Stomach (tissue), 19 donors: ENCODE measurements at regions of chr4 and their contacts with region 1.

Region 1: GRCh38 chr4:159206427-159206871 is 103.6 kb downstream of the RAPGEF2 start:
- DNase-seq: peak in 1 of 2 donors; percentile 25
- H3K4me3 ChIP-seq: no peak overlapping the region
- H3K27ac ChIP-seq: no peak overlapping the region
- H3K4me1 ChIP-seq: peaks cover 0 to 44% (median 19%) of the 10 kb centered on the region in 4 donors
- H3K27me3 ChIP-seq: no peaks in the 10 kb centered on the region
- CTCF ChIP-seq: no peak
- EP300 ChIP-seq: no peak
- POLR2A ChIP-seq: no peak

Region 2: GRCh38 chr4:158722917-158723793 is 483.3 kb before region 1 on chr4 and contains the start of gene PPID:
- intact Hi-C with region 1: loop called (anchors 10 kb)
- DNase-seq: peak; percentile 86 to 96
- H3K4me3 ChIP-seq: peak within 1 kb of the TSS; percentile 68 to 93 (median 82)
- H3K27ac ChIP-seq: peak within 1 kb of the TSS; percentile 88 to 95 (median 93)
- H3K4me1 ChIP-seq: peaks cover 10 to 30% (median 18%) of the 10 kb centered on the region in 4 donors
- H3K27me3 ChIP-seq: no peaks in the 10 kb centered on the region
- CTCF ChIP-seq: no peak
- EP300 ChIP-seq: no peak
- POLR2A ChIP-seq: peak in 1 of 4 donors; percentile 43
- total RNA-seq, gene PPID: 1.2 to 98.5 (median 12.9) TPM

Region 3: GRCh38 chr4:158860856-158861255 is 345.6 kb before region 1 on chr4:
- intact Hi-C with region 1: loop called (anchors 10 kb)
- DNase-seq: no peak
- H3K4me3 ChIP-seq: no peak overlapping the region
- H3K27ac ChIP-seq: no peak overlapping the region
- H3K4me1 ChIP-seq: peaks cover 0 to 8% (median 6%) of the 10 kb centered on the region in 4 donors
- H3K27me3 ChIP-seq: no peaks in the 10 kb centered on the region
- CTCF ChIP-seq: no peak
- EP300 ChIP-seq: no peak
- POLR2A ChIP-seq: no peak

Region 4: DNA sequence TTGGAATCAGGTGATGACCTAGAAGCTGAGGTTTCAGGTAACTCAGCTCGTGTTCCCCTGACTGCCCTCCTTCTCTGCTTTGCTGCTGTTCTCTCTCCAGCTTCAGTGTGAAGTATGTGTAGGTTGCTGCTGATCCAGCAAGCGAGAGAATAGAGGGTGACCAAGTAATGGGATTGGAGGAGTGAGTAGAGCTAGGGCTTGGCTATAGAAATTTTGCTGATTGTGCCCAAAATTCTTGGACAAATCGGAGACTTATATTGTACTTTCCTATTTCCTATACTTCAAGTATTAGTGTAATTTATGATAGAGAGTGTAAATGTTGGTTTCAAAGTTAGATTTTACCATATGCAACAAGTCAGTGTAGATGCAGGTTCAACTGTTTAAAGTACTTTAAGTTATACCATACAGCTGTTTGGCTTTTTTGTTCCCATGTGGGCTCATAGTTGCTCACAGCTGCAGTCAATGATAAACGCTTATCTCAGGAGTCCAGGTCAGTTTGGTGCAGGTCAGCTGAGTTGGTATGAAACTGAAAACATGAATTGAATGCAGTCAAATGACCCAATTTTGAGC is 55.5 kb before region 1 on chr4:
- intact Hi-C with region 1: no loop called
- DNase-seq: peak in 1 of 2 donors; percentile 44
- H3K4me3 ChIP-seq: no peak overlapping the region
- H3K27ac ChIP-seq: no peak overlapping the region
- H3K4me1 ChIP-seq: peaks cover 15 to 72% (median 41%) of the 10 kb centered on the region in 4 donors
- H3K27me3 ChIP-seq: no peaks in the 10 kb centered on the region
- CTCF ChIP-seq: no peak
- EP300 ChIP-seq: no peak
- POLR2A ChIP-seq: no peak